ENCODE measurements at regions of chr2 and their contacts with region 1.

Region 1: GRCh38 chr2:144152817-144153271 is 367.1 kb downstream of the ZEB2 start:
- DNase-seq: peak in 3 of 4 experiments; percentile 10 to 84 (median 71)
- ATAC-seq: peak; percentile 91
- H3K4me3 ChIP-seq: no peak overlapping the region
- H3K27ac ChIP-seq: peak overlapping the region; percentile 65; the same call in 2 of the 3 replicates
- H3K4me1 ChIP-seq: peaks cover 0 to 26% of the 10 kb centered on the region in 2 experiments; a peak in 4 of 5 replicates
- H3K27me3 ChIP-seq: no peaks in the 10 kb centered on the region
- CTCF ChIP-seq: peak; percentile 30 to 44 (median 34); a peak in 3 of 6 replicates
- EP300 ChIP-seq: peak; percentile 83
- POLR2A ChIP-seq: no peak
- RAD21 ChIP-seq: peak; percentile 54 to 57

Region 2: GRCh38 chr2:143686585-143687164 is 466.2 kb before region 1 on chr2:
- CTCF ChIA-PET with region 1: no interaction called
- POLR2A ChIA-PET with region 1: no interaction called
- in situ Hi-C with region 1: no loop called
- intact Hi-C with region 1: loop called (anchors 10 kb)
- DNase-seq: peak; percentile 43 to 59 (median 46)
- ATAC-seq: peak; percentile 87
- H3K4me3 ChIP-seq: no peak overlapping the region
- H3K27ac ChIP-seq: no peak overlapping the region
- H3K4me1 ChIP-seq: no peaks in the 10 kb centered on the region; a peak in 1 of 5 replicates
- H3K27me3 ChIP-seq: no peaks in the 10 kb centered on the region
- CTCF ChIP-seq: peak; percentile 39 to 63 (median 54); a peak in 5 of 6 replicates
- EP300 ChIP-seq: no peak
- POLR2A ChIP-seq: no peak
- RAD21 ChIP-seq: peak; percentile 41 to 56; a peak in 3 of 4 replicates

Region 3: DNA sequence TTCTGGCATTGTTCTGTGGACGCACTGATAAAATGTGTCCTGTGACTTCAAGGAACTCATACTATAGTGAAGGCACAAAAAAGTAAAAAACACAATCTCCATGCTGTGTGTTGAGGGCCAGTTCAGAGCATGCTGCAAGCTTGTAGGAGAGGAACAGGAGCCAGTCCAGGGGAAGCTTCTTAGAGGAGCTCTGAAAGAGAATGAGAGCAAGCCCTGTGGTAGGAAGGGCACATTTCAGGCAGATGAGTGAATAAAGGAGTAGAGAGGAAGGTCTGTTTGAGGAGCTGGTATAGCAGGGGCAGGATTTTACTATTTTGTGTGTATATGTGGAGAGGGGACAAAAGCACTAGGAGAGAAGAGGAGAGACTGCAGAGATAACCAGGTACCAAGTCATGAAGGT is 111.2 kb before region 1 on chr2:
- CTCF ChIA-PET with region 1: no interaction called
- POLR2A ChIA-PET with region 1: no interaction called
- in situ Hi-C with region 1: no loop called
- intact Hi-C with region 1: loop called (anchors 2 kb)
- DNase-seq: no peak
- ATAC-seq: peak; percentile 47; the same call in 2 of the 3 replicates
- H3K4me3 ChIP-seq: no peak overlapping the region
- H3K27ac ChIP-seq: no peak overlapping the region
- H3K4me1 ChIP-seq: no peaks in the 10 kb centered on the region; a peak in 1 of 5 replicates
- H3K27me3 ChIP-seq: no peaks in the 10 kb centered on the region
- CTCF ChIP-seq: no peak
- EP300 ChIP-seq: no peak
- POLR2A ChIP-seq: no peak
- RAD21 ChIP-seq: no peak

Region 4: GRCh38 chr2:144071461-144071860 is 81.4 kb before region 1 on chr2:
- CTCF ChIA-PET with region 1: no interaction called
- POLR2A ChIA-PET with region 1: no interaction called
- in situ Hi-C with region 1: no loop called
- intact Hi-C with region 1: no loop called
- DNase-seq: peak in 1 of 4 experiments; percentile 9
- ATAC-seq: no peak
- H3K4me3 ChIP-seq: no peak overlapping the region
- H3K27ac ChIP-seq: no peak overlapping the region
- H3K4me1 ChIP-seq: no peaks in the 10 kb centered on the region
- H3K27me3 ChIP-seq: no peaks in the 10 kb centered on the region
- CTCF ChIP-seq: peak in 2 of 3 experiments; percentile 13 to 22; a peak in 3 of 6 replicates
- EP300 ChIP-seq: no peak
- POLR2A ChIP-seq: no peak
- RAD21 ChIP-seq: peak in 1 of 2 experiments; percentile 31; a peak in 1 of 4 replicates

Region 5: DNA sequence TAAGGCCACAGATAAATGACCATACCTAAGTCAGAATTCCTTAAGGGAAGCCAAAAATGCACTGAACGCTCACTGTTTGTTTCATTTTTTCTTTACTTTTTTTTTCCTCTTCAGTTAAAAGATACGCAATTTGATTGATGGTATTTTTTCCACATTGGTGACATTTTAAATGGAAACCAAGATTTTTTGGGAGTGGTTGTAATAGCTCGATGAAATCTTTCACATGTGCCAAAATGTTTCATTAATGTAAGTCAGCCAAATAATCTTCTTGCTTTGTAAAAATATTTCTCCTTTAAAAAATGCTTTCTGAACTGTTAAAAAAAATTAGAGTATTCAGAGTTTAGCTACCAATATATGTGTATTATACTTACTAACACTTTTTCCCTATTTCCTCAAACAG is 27.3 kb after region 1 on chr2:
- CTCF ChIA-PET with region 1: no interaction called
- POLR2A ChIA-PET with region 1: no interaction called
- in situ Hi-C with region 1: no loop called
- intact Hi-C with region 1: no loop called
- DNase-seq: no peak
- ATAC-seq: no peak
- H3K4me3 ChIP-seq: no peak overlapping the region
- H3K27ac ChIP-seq: no peak overlapping the region
- H3K4me1 ChIP-seq: no peaks in the 10 kb centered on the region
- H3K27me3 ChIP-seq: no peaks in the 10 kb centered on the region
- CTCF ChIP-seq: no peak
- EP300 ChIP-seq: no peak
- POLR2A ChIP-seq: no peak
- RAD21 ChIP-seq: no peak

Region 6: DNA sequence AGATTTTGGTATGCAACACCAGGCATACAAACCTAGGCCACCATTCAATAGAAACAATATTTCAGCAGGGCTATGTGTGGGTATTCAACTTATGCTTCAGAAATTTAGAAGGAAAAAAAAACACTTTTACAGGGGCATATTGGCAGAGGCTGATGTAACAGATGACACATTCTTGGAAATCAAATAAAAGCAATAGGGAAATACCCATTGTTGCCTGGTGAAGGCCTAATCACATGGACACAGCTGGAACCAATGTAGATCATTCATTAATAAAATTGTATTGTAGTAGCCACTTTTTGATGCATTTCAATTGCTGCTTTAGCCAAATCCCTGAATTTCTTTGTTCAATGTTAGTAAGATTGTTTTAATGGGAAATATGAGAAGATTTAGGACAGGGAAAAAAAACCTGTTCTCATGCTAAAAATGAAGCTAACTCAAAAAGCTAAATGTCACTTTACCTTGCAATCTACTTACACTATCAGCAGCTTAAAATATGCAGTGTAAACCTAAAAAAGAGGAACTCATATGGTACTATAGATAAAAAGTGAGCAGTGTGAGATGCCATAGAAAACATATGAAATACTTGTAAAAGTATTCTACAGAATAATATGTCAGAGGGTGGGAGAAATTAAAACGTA is 77.7 kb after region 1 on chr2:
- CTCF ChIA-PET with region 1: no interaction called
- POLR2A ChIA-PET with region 1: no interaction called
- in situ Hi-C with region 1: no loop called
- intact Hi-C with region 1: loop called (anchors 5 kb)
- DNase-seq: peak in 2 of 4 experiments; percentile 30 to 41
- ATAC-seq: peak; percentile 78
- H3K4me3 ChIP-seq: no peak overlapping the region
- H3K27ac ChIP-seq: peak overlapping the region; percentile 75
- H3K4me1 ChIP-seq: peaks cover 0 to 36% of the 10 kb centered on the region in 2 experiments; a peak in 3 of 5 replicates
- H3K27me3 ChIP-seq: no peaks in the 10 kb centered on the region
- CTCF ChIP-seq: no peak
- EP300 ChIP-seq: peak; percentile 79
- POLR2A ChIP-seq: no peak
- RAD21 ChIP-seq: peak in 1 of 2 experiments; percentile 13; a peak in 2 of 4 replicates

Region 7: DNA sequence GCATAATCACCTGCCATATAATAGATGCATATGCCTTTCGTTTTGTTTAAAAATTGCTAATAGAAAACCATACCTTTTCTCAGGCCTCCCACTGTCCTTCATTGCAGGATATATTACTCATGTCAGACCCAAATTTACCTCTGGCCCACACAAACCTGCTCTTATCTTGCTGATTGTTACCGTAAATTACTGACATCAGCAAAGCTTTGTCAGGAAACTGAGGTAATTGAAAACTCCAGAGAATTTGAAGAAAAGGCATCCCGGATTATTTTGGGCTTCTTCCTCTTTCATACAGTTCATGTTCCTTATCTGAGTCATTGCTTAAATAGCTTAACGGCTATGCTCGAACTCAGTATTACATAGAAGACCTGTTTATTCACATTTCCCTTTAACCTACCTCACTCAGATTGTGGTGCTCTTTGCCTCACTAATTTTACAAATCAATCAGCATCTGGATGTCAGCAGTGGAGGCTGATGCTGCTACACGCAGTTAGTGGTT is 221.4 kb after region 1 on chr2:
- CTCF ChIA-PET with region 1: no interaction called
- POLR2A ChIA-PET with region 1: no interaction called
- in situ Hi-C with region 1: no loop called
- intact Hi-C with region 1: no loop called
- DNase-seq: no peak
- ATAC-seq: no peak
- H3K4me3 ChIP-seq: no peak overlapping the region
- H3K27ac ChIP-seq: peak overlapping the region; percentile 41; the same call in 2 of the 3 replicates
- H3K4me1 ChIP-seq: peaks cover 4 to 72% of the 10 kb centered on the region in 2 experiments
- H3K27me3 ChIP-seq: no peaks in the 10 kb centered on the region
- CTCF ChIP-seq: no peak
- EP300 ChIP-seq: no peak
- POLR2A ChIP-seq: no peak
- RAD21 ChIP-seq: no peak